Activated naive CD4-positive, alpha-beta T cell treated with anti-CD3 and anti-CD28 coated beads for 36 hours (primary cell): ENCODE measurements at regions of chr1 and their contacts with region 1.

Region 1: GRCh38 chr1:160681067-160681890 is 30.3 kb downstream of the CD48 start:
- DNase-seq: peak; percentile 96
- H3K4me3 Mint-ChIP-seq: no peak overlapping the region
- H3K27ac Mint-ChIP-seq: peak overlapping the region; percentile 95
- H3K4me1 Mint-ChIP-seq: peaks cover 77% of the 10 kb centered on the region
- H3K27me3 Mint-ChIP-seq: no peaks in the 10 kb centered on the region

Region 2: DNA sequence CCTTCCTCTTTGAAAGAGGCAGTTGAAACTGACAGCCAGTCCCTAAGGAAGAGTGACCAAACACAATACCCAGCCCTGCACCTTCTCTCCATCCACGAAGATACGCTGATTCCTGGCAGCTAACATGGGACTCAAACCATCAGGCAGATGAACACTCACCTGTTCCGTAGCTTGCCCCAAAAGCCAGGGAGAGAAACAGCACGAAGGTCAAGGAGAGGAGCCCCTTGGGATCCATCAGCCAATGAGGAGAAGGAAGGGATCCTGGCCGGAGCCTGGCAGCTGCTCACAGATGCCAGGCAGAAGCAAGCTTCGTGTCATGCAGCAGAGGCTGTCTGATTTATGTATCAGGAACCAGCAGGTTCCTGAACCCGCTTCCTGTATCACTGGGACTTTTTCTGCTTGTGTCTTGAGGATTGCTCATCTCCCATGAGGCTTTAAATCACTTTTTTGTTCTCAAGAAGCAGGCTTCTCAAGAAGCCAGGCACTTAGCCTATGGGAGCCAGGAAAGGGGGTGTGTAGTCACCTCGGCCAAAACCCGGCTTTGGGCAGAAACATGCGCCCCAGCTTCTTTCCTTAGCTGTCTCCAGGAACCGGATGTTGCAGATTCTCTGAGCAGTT is 34.5 kb before region 1 on chr1 and contains the start of gene SLAMF1:
- CTCF ChIA-PET with region 1: interaction called, 14 read pairs
- intact Hi-C with region 1: no loop called
- DNase-seq: peak; percentile 84
- H3K4me3 Mint-ChIP-seq: peak within 1 kb of the TSS; percentile 99
- H3K27ac Mint-ChIP-seq: peak within 1 kb of the TSS; percentile 99
- H3K4me1 Mint-ChIP-seq: peaks cover 49% of the 10 kb centered on the region
- H3K27me3 Mint-ChIP-seq: no peaks in the 10 kb centered on the region
- total RNA-seq, gene SLAMF1: 101 to 112 TPM

Region 3: DNA sequence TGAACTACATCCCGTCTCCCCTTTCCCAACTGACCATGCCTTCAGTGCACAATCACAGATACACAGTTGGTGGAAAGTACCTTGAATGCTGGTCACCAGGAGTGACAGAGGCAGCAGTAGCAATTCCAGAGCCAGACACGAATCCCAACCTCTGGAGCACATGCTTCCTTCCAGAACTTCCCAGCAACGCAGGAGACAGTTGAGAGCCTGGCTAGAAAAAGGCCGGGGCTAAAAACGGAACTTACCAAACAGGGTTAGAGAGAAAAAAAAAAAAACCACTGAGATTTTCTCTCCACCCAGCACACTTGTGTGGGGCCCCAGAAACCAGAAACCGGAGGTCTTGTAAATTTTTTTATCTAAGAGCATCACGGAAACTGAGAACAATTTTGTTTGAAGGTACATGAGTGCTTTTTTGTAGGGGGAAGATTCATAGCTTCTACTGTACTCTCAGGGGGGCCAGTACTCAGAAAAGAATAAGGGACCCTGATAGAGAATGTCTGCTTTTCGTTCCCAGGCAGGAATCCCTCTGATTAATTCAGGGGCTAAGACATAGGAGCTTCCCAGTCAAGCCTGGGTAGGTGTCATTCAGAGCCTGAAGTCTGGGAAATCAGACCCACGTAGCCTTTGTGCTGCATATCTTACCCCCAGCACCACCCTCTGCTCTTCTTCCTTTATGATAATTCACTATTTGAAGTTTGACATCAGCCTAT is 30.5 kb after region 1 on chr1 and contains the start of gene CD48:
- CTCF ChIA-PET with region 1: interaction called, 34 read pairs
- intact Hi-C with region 1: loop called (anchors 1 kb)
- DNase-seq: peak; percentile 70
- H3K4me3 Mint-ChIP-seq: no peak within 1 kb of the TSS
- H3K27ac Mint-ChIP-seq: no peak within 1 kb of the TSS
- H3K4me1 Mint-ChIP-seq: peaks cover 28% of the 10 kb centered on the region
- H3K27me3 Mint-ChIP-seq: no peaks in the 10 kb centered on the region
- total RNA-seq, gene CD48: 338 to 340 TPM

Region 4: GRCh38 chr1:160748181-160748877 is 67.0 kb after region 1 on chr1:
- CTCF ChIA-PET with region 1: interaction called, 4 read pairs
- intact Hi-C with region 1: loop called (anchors 1 kb)
- DNase-seq: peak; percentile 28
- H3K4me3 Mint-ChIP-seq: no peak overlapping the region
- H3K27ac Mint-ChIP-seq: peak overlapping the region; percentile 81
- H3K4me1 Mint-ChIP-seq: peaks cover 94% of the 10 kb centered on the region
- H3K27me3 Mint-ChIP-seq: no peaks in the 10 kb centered on the region

Region 5: GRCh38 chr1:160777486-160778089 is 96.3 kb after region 1 on chr1:
- CTCF ChIA-PET with region 1: interaction called, 10 read pairs
- intact Hi-C with region 1: loop called (anchors 1 kb)
- DNase-seq: peak; percentile 75
- H3K4me3 Mint-ChIP-seq: no peak overlapping the region
- H3K27ac Mint-ChIP-seq: no peak overlapping the region
- H3K4me1 Mint-ChIP-seq: peaks cover 56% of the 10 kb centered on the region
- H3K27me3 Mint-ChIP-seq: no peaks in the 10 kb centered on the region

Region 6: GRCh38 chr1:160837558-160838205 is 156.4 kb after region 1 on chr1:
- CTCF ChIA-PET with region 1: interaction called, 4 read pairs
- intact Hi-C with region 1: loop called (anchors 1 kb)
- DNase-seq: peak; percentile 90
- H3K4me3 Mint-ChIP-seq: peak overlapping the region; percentile 16
- H3K27ac Mint-ChIP-seq: peak overlapping the region; percentile 82
- H3K4me1 Mint-ChIP-seq: peaks cover 49% of the 10 kb centered on the region
- H3K27me3 Mint-ChIP-seq: no peaks in the 10 kb centered on the region